ENCODE measurements at regions of chr1 and their contacts with region 1.

Region 1: GRCh38 chr1:11907275-11908094 is 18.7 kb downstream of the KIAA2013 start:
- DNase-seq: peak; percentile 80 to 98 (median 88)

Region 2: GRCh38 chr1:11768821-11769220 is 138.7 kb before region 1 on chr1:
- intact Hi-C with region 1: no loop called
- DNase-seq: no peak

Region 3: GRCh38 chr1:11838349-11839272 is 68.9 kb before region 1 on chr1:
- intact Hi-C with region 1: loop called (anchors 5 kb)
- DNase-seq: peak; percentile 54 to 97 (median 81)

Region 4: DNA sequence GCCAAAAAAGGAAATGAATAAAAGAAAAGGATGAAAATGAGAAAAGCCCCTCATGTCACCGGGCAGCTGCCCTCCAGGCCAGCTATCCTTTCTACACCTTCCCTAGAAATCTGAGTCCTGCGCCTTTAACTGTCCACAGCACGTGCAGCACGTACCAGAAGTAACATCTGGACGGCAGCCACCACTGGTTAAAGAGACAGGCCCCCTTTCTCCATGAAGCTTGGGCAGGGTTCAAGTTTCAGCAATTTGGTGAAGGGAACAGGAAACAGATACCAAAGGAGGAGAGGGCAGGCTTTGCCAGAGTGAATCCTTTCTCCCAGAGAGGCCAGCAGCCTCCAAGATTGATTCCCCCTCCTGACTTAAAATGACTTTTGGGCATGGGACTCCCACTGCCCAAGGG is 22.4 kb after region 1 on chr1:
- intact Hi-C with region 1: loop called (anchors 1 kb)
- DNase-seq: peak in 5 of 10 donors; percentile 43 to 84 (median 48)

Region 5: DNA sequence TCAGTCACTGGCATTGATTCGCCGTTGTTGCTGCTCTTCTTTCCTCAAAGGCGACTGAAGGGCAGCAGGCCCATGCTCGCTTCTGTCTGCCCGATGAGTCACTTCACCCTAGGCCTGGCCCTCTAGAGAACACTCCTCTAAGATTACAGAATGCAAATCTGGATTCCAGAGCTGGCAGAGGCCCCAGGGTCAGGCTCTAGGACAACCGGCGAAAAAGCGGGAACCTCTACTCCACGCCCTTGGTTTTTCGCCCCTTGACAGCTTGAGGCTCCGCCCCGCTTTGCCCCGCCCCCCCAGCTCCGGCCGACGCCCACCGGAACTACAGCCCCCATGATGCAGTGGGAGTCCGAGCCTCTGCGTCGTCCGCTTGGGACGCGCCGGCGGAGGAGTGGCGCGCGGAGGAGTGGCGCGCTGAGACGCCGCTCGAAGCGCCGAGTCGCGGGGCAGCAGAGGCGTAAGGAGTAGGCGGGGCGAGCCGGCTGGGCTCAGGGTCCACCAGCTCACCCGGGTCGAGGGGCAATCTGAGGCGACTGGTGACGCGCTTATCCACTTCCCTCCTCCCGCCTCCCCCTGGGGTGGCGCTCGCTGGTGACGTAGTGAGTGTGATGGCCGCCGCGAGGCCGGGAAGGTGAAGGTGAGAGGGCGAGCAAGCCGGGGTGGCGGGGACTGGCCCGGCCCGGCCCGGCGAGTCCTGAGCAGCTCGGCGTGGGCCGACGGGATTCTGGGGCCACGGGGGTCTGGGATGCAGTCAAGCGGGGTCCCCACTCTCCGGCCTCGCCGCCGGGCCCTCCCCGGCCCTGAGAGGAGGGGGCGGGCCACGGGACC is 72.6 kb after region 1 on chr1 and contains the start of gene MFN2:
- intact Hi-C with region 1: loop called (anchors 5 kb)
- DNase-seq: peak; percentile 89 to 99 (median 93)